Activated CD4-positive, alpha-beta T cell treated with anti-CD3 and anti-CD28 coated beads for 36 hours (primary cell): ENCODE measurements at regions of chr6 and their contacts with region 1.

Region 1: DNA sequence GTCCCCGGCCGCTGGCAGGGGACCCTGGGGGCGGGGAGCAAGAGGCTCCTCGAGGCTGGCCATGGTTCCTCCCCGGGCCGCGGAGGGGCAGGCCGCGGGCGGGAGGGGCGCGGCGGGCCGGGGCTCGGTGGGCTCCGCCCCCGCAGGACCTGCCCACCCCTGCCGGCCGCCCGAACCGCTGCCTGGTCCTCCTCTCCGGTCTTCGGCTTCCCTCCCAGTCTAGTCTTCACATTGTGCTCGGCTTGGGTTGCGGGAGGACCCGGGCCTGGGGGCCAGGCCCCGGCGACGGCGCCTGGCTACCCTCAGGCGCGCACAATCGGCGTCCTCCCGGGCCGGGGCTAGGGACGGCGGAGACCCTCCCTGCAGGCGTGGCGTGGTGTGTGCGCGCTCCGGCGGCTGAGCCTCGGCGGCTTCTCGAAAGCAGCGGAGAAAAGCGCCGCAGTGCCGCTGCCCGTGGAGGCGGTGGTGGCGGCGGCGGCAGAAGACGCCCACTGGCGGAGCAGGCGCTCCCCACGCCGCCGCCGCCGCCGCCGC is at the start of gene PDE10A:
- DNase-seq: no peak
- ATAC-seq: no peak
- H3K4me3 Mint-ChIP-seq: peak within 1 kb of the TSS; percentile 17
- H3K27ac Mint-ChIP-seq: no peak within 1 kb of the TSS
- H3K4me1 Mint-ChIP-seq: no peaks in the 10 kb centered on the region
- H3K27me3 Mint-ChIP-seq: peaks cover 39% of the 10 kb centered on the region
- total RNA-seq, gene PDE10A: not detected

Region 2: GRCh38 chr6:165676435-165677068 is 13.7 kb after region 1 on chr6:
- CTCF ChIA-PET with region 1: no interaction called
- POLR2A ChIA-PET with region 1: no interaction called
- intact Hi-C with region 1: no loop called
- DNase-seq: no peak
- ATAC-seq: no peak
- H3K4me3 Mint-ChIP-seq: no peak overlapping the region
- H3K27ac Mint-ChIP-seq: no peak overlapping the region
- H3K4me1 Mint-ChIP-seq: no peaks in the 10 kb centered on the region
- H3K27me3 Mint-ChIP-seq: peaks cover 2% of the 10 kb centered on the region

Region 3: GRCh38 chr6:165850434-165851019 is 187.7 kb after region 1 on chr6:
- CTCF ChIA-PET with region 1: no interaction called
- POLR2A ChIA-PET with region 1: no interaction called
- intact Hi-C with region 1: loop called in 1 of 2 experiments (anchors 10 kb)
- DNase-seq: peak; percentile 77
- ATAC-seq: peak; percentile 66
- H3K4me3 Mint-ChIP-seq: no peak overlapping the region
- H3K27ac Mint-ChIP-seq: no peak overlapping the region
- H3K4me1 Mint-ChIP-seq: peaks cover 10% of the 10 kb centered on the region
- H3K27me3 Mint-ChIP-seq: peaks cover 46% of the 10 kb centered on the region

Region 4: DNA sequence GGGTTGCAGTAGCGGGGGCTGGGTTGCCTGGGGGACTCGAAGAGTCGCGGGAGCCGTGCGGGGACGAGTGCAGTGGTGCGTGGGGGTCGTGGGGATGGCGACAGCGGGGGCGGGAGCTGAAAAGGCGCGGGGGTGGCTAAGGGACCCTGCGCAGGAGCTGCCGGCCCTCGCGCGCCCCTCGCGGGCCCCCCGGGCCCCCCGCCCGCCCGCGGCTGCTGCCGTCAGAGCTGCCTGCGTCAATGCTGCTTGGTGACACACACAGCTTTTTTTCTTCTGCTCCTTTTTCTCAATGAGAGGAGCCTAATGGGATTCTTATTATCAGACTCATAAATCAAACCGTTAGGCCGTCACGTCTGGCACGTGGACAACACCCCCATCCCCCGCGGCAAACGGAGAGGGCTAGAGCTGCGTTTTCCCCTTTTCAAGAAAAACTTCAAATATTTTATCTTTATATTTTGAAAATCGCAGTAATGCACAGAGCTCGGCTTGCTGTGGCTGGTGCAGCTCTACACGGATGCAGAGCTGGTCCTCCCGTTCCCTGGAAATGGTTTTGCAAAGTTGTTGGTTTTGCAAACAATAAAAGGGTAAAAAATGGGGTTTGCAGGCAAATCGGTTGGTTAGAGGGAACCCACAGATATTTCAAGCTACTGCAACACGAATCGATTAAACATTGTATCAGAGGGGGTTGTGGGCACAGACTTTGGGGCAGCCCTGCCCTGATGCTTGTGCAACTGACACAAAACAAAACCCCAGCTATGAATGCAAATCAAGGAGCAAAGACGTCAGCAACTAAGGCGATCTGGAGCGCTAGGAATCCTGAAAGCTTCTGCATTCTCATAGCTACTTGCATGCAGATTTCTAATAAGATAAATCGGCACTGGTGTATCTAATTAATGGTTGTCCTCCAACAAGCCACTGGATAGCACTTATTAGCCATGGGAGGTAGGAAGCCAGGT is 343.4 kb after region 1 on chr6:
- CTCF ChIA-PET with region 1: no interaction called
- POLR2A ChIA-PET with region 1: no interaction called
- intact Hi-C with region 1: loop called in 1 of 2 experiments (anchors 10 kb)
- DNase-seq: no peak
- ATAC-seq: no peak
- H3K4me3 Mint-ChIP-seq: no peak overlapping the region
- H3K27ac Mint-ChIP-seq: no peak overlapping the region
- H3K4me1 Mint-ChIP-seq: no peaks in the 10 kb centered on the region
- H3K27me3 Mint-ChIP-seq: peaks cover 48% of the 10 kb centered on the region

Region 5: DNA sequence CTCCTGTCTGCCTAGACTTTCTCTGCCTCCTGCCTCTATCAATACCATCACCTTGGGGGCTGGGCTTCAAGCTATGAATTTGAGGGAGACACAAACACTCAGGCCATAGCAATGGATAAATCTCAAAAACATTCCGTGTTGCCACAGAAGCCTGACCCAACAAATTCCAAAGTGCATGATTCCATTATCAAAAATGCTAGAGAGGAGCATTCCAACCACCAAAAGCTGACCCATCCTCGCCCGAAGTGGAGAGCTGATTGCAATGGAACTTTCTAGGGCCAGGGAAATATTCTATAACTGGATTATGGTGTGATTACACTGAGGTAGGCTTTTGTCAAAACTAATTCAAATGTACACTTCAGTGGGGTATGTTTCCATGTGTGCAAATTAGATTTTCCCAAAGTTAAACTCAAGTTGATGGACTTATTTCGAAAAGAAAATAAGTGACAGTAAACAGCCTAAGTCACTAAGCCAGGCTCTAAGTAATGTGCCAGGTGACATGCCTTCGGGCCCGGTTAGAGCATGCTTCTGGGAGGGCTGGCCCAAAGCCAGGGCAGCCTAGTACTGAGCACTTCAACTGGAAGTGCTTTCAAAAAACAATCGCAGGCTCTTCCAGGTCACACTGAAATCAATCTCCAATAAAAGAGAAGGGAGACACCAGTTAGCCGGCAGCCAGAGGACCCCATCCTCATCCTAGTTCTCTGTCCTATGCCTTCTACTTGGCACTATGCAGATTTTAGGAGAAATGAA is 362.5 kb after region 1 on chr6:
- CTCF ChIA-PET with region 1: no interaction called
- POLR2A ChIA-PET with region 1: no interaction called
- intact Hi-C with region 1: no loop called
- DNase-seq: no peak
- ATAC-seq: no peak
- H3K4me3 Mint-ChIP-seq: no peak overlapping the region
- H3K27ac Mint-ChIP-seq: no peak overlapping the region
- H3K4me1 Mint-ChIP-seq: no peaks in the 10 kb centered on the region
- H3K27me3 Mint-ChIP-seq: no peaks in the 10 kb centered on the region

Region 6: DNA sequence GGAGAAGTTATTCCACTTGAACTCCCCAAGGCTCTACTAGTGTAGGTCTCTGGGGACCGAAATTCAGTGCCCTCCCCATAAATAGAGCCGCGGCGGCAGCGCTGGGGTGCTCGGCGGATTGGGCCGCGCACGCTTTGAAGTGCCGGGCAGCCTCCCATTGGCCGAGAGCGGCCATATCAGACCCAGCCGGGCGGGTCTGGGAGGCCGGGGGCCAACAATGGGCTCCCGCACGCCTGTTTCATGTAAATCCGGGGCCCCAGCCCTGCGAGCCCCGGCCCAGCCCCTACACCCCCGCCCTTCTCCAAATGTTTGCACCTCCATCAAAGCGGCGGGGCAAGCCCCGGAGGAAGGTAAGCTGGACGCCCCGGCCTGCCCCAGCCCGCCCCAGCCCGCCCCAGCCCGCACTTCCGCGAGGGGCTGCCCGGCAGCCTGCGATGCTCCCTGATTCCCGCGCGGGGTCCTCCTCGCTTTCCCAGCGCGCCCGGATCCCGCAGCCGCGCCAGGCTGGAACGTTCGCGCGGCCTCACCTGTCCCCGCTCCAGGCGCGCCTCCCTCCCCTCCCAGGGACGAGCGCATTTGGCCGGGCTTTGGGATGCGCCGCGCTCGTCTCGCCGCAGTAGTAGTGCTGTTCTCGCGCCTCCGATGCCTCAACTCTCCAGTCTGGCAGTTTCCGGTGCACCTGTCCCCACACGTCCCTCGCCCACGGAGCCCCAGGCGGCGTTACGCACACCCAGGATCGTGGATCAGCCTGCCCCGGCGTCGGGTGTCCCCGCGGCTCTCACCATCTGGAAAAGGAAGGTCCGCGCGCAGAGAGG is 505.2 kb after region 1 on chr6 and contains the start of gene TBXT:
- CTCF ChIA-PET with region 1: no interaction called
- POLR2A ChIA-PET with region 1: no interaction called
- intact Hi-C with region 1: loop called in 1 of 2 experiments (anchors 2 kb)
- DNase-seq: no peak
- ATAC-seq: no peak
- H3K4me3 Mint-ChIP-seq: peak within 1 kb of the TSS; percentile 52
- H3K27ac Mint-ChIP-seq: no peak within 1 kb of the TSS
- H3K4me1 Mint-ChIP-seq: peaks cover 5% of the 10 kb centered on the region
- H3K27me3 Mint-ChIP-seq: peaks cover 59% of the 10 kb centered on the region
- total RNA-seq, gene TBXT: not detected

Region 7: DNA sequence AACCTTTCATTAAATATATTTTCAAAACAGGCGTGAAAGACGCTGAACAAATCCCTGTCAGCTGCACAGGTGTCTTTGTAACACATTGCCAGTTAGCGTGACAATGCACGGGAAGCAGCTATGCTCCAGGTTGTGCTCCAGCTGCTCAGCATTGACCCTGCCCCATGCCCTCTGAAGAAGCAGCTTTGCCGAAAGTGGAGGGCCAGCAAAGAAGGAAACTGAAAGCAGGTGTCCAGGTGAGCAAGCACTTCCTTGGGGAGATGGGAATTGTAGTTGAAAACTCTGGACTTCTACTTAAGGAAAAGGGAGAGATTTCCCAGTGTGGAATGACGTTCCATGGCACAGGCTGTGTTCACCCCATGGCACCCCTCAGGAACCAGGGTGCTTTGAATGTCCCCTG is 1787.8 kb after region 1 on chr6:
- CTCF ChIA-PET with region 1: no interaction called
- POLR2A ChIA-PET with region 1: no interaction called
- intact Hi-C with region 1: no loop called
- DNase-seq: no peak
- ATAC-seq: no peak
- H3K4me3 Mint-ChIP-seq: no peak overlapping the region
- H3K27ac Mint-ChIP-seq: no peak overlapping the region
- H3K4me1 Mint-ChIP-seq: no peaks in the 10 kb centered on the region
- H3K27me3 Mint-ChIP-seq: no peaks in the 10 kb centered on the region